Activated CD4-positive, alpha-beta memory T cell treated with anti-CD3 and anti-CD28 coated beads for 36 hours (primary cell): ENCODE measurements at regions of chr19 and their contacts with region 1.

Region 1: DNA sequence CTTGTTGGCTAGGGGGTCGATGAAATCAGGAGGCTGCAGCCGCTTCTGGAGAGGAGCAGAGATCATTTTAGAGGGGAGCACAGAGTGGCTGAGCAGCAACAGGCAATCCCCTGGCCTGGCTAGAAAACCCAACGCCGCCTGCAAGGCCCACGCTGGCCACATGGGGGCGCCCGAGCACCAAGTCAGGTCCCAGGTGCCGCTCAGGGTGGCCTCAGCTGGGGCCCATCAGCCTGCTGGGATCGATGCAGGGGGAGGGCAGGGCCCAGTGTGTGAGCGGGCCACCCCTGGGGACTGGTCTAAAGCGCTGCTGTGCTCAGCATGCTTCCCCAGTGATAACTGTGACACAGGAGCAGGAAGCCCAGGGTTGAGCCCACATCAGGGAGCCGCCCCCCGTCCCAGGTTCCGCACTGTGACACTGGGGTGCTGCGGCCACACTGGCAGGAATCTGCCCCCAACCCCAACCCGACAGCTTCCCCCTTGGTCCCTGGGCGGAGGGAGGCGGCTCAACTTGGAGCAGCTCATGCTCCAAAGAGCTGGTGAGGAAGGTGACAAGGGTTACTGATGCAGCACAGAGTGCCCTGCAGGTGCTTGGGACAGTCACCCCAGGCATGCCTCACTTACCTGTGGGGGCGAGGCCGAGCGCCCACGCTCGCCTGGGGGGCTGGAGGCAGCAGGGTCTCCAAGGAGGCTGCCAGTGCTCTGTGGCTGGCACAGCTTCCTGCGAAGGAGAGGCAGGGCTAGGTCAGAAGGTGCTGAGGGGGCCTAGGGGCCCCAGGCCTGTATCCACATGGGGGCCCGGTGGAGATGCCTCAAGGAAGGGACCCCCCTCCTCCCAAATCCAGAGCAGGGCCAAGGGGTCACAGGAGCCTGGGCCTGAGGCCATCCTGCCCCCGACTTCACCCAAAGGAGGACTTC is 13.3 kb upstream of the ISYNA1 start:
- DNase-seq: peak; percentile 91
- H3K4me3 Mint-ChIP-seq: no peak overlapping the region
- H3K27ac Mint-ChIP-seq: no peak overlapping the region
- H3K4me1 Mint-ChIP-seq: no peaks in the 10 kb centered on the region
- H3K27me3 Mint-ChIP-seq: no peaks in the 10 kb centered on the region

Region 2: GRCh38 chr19:18379803-18380747 is 71.1 kb before region 1 on chr19:
- CTCF ChIA-PET with region 1: no interaction called
- POLR2A ChIA-PET with region 1: no interaction called
- intact Hi-C with region 1: no loop called
- DNase-seq: no peak
- H3K4me3 Mint-ChIP-seq: no peak overlapping the region
- H3K27ac Mint-ChIP-seq: no peak overlapping the region
- H3K4me1 Mint-ChIP-seq: no peaks in the 10 kb centered on the region
- H3K27me3 Mint-ChIP-seq: peaks cover 7% of the 10 kb centered on the region

Region 3: GRCh38 chr19:18433015-18433691 is 18.0 kb before region 1 on chr19:
- CTCF ChIA-PET with region 1: interaction called, 12 read pairs
- POLR2A ChIA-PET with region 1: no interaction called
- intact Hi-C with region 1: no loop called
- DNase-seq: no peak
- H3K4me3 Mint-ChIP-seq: no peak overlapping the region
- H3K27ac Mint-ChIP-seq: no peak overlapping the region
- H3K4me1 Mint-ChIP-seq: peaks cover 20% of the 10 kb centered on the region
- H3K27me3 Mint-ChIP-seq: no peaks in the 10 kb centered on the region

Region 4: GRCh38 chr19:18469069-18469846 is 18.1 kb after region 1 on chr19:
- CTCF ChIA-PET with region 1: interaction called, 16 read pairs
- POLR2A ChIA-PET with region 1: no interaction called
- intact Hi-C with region 1: no loop called
- DNase-seq: peak; percentile 75
- H3K4me3 Mint-ChIP-seq: no peak overlapping the region
- H3K27ac Mint-ChIP-seq: peak overlapping the region; percentile 13
- H3K4me1 Mint-ChIP-seq: peaks cover 18% of the 10 kb centered on the region
- H3K27me3 Mint-ChIP-seq: no peaks in the 10 kb centered on the region